GM12878 (cell line): ENCODE measurements at regions of chr4 and their contacts with region 1.

Region 1: DNA sequence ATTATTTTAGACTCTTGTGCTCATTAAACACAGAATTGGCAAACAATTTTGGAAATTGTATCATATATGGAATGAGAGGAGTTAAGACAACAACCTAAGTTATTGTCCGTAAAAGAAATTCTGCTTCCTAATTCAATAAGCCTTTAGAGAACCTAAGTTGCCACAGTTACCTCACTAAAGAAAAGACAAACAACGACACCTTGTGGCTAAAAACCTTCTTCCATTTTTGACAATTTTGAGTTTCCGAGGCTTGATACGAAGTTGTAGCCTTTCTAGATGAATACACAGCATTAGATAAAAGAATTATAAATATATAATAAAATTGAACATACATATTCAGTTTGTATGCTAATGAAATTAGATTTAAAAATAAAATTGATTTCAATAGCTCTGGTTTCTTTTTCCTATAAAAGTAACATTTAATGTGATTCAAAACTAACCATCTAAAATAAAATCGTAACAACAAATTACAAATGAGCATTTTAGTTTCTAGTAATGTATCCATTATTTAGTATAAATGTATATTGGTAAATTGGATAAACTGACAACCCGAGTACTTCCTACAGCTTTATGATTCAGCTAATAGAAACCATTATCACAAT is 275.1 kb downstream of the GPM6A start:
- DNase-seq: peak; percentile 7
- ATAC-seq: peak; percentile 72
- H3K4me3 ChIP-seq: no peak overlapping the region
- H3K27ac ChIP-seq: no peak overlapping the region
- H3K4me1 ChIP-seq: no peaks in the 10 kb centered on the region
- H3K27me3 ChIP-seq: no peaks in the 10 kb centered on the region
- CTCF ChIP-seq: peak; percentile 37 to 48 (median 44); a peak in 5 of 6 replicates
- EP300 ChIP-seq: no peak
- POLR2A ChIP-seq: no peak
- RAD21 ChIP-seq: peak; percentile 56

Region 2: GRCh38 chr4:174517502-174518445 is 1019.2 kb before region 1 on chr4:
- CTCF ChIA-PET with region 1: no interaction called
- POLR2A ChIA-PET with region 1: no interaction called
- RAD21 ChIA-PET with region 1: no interaction called
- SMC1A ChIA-PET with region 1: no interaction called
- in situ Hi-C with region 1: no loop called
- intact Hi-C with region 1: no loop called
- DNase-seq: no peak
- ATAC-seq: no peak
- H3K4me3 ChIP-seq: no peak overlapping the region
- H3K27ac ChIP-seq: no peak overlapping the region
- H3K4me1 ChIP-seq: no peaks in the 10 kb centered on the region
- H3K27me3 ChIP-seq: peaks cover 6 to 8% of the 10 kb centered on the region in 2 experiments
- CTCF ChIP-seq: no peak
- EP300 ChIP-seq: no peak
- POLR2A ChIP-seq: no peak
- RAD21 ChIP-seq: no peak

Region 3: GRCh38 chr4:175509320-175509719 is 27.6 kb before region 1 on chr4:
- CTCF ChIA-PET with region 1: interaction called, 18 read pairs
- POLR2A ChIA-PET with region 1: no interaction called
- RAD21 ChIA-PET with region 1: interaction called, 3 read pairs
- SMC1A ChIA-PET with region 1: interaction called, 3 read pairs
- in situ Hi-C with region 1: no loop called
- intact Hi-C with region 1: no loop called
- DNase-seq: no peak
- ATAC-seq: peak; percentile 69
- H3K4me3 ChIP-seq: no peak overlapping the region
- H3K27ac ChIP-seq: no peak overlapping the region
- H3K4me1 ChIP-seq: no peaks in the 10 kb centered on the region
- H3K27me3 ChIP-seq: no peaks in the 10 kb centered on the region
- CTCF ChIP-seq: peak; percentile 4 to 25 (median 15); a peak in 1 of 6 replicates
- EP300 ChIP-seq: no peak
- POLR2A ChIP-seq: no peak
- RAD21 ChIP-seq: no peak

Region 4: DNA sequence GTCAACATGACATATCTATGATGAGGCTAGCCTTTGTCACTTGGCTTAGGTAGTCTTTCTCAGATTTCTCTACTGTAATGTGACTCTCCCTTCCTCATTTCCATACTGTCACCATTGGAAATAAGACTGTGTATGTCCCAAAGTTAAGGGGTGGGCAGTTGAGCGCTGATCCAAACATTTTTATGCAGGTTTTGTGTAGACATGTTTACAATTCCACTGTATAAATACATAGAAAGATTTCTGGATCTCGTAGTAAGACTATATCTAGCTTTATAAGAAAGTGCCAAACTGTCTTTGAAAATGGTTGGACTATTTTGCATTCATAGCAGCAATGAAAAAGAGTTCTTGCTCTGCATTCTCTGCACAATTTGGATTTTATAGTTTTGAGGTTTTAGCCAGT is 47.9 kb after region 1 on chr4:
- CTCF ChIA-PET with region 1: no interaction called
- POLR2A ChIA-PET with region 1: no interaction called
- RAD21 ChIA-PET with region 1: no interaction called
- SMC1A ChIA-PET with region 1: no interaction called
- in situ Hi-C with region 1: no loop called
- intact Hi-C with region 1: no loop called
- DNase-seq: no peak
- ATAC-seq: no peak
- H3K4me3 ChIP-seq: no peak overlapping the region
- H3K27ac ChIP-seq: no peak overlapping the region
- H3K4me1 ChIP-seq: no peaks in the 10 kb centered on the region
- H3K27me3 ChIP-seq: no peaks in the 10 kb centered on the region
- CTCF ChIP-seq: no peak
- EP300 ChIP-seq: no peak
- POLR2A ChIP-seq: no peak
- RAD21 ChIP-seq: no peak

Region 5: DNA sequence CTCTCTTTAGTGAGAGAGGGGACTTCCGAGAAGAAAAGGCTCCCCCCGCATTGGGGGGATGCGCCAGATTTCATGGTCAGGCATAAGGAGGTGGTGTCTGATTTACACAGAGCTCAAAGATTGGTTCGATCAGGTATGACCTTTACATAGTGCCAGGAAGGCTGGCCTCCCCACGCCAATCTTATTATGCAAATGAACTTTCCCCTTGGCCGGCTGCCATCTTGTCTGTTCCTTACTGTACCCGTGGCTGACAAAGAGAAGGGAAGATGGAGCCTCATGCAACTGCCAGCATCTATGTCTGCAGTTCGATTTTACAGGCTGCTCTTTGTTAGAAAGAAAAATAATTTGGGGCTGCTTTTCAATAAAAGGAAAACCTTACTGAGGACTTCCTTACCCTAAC is 77.9 kb after region 1 on chr4:
- CTCF ChIA-PET with region 1: no interaction called
- POLR2A ChIA-PET with region 1: no interaction called
- RAD21 ChIA-PET with region 1: no interaction called
- SMC1A ChIA-PET with region 1: no interaction called
- in situ Hi-C with region 1: no loop called
- intact Hi-C with region 1: no loop called
- DNase-seq: no peak
- ATAC-seq: no peak
- H3K4me3 ChIP-seq: no peak overlapping the region
- H3K27ac ChIP-seq: no peak overlapping the region
- H3K4me1 ChIP-seq: no peaks in the 10 kb centered on the region
- H3K27me3 ChIP-seq: no peaks in the 10 kb centered on the region
- CTCF ChIP-seq: no peak
- EP300 ChIP-seq: no peak
- POLR2A ChIP-seq: no peak
- RAD21 ChIP-seq: no peak